Sigmoid colon (tissue), 7 donors: ENCODE measurements at regions of chr18 and their contacts with region 1.

Region 1: GRCh38 chr18:4106407-4107033 is 348.6 kb downstream of the DLGAP1 start:
- DNase-seq: peak; percentile 70
- H3K4me3 ChIP-seq: peak overlapping the region in 3 of 4 donors; percentile 6 to 26 (median 23)
- H3K27ac ChIP-seq: no peak overlapping the region
- H3K4me1 ChIP-seq: no peaks in the 10 kb centered on the region
- H3K27me3 ChIP-seq: no peaks in the 10 kb centered on the region
- CTCF ChIP-seq: peak; percentile 33 to 84 (median 63)
- EP300 ChIP-seq: no peak
- POLR2A ChIP-seq: no peak

Region 2: DNA sequence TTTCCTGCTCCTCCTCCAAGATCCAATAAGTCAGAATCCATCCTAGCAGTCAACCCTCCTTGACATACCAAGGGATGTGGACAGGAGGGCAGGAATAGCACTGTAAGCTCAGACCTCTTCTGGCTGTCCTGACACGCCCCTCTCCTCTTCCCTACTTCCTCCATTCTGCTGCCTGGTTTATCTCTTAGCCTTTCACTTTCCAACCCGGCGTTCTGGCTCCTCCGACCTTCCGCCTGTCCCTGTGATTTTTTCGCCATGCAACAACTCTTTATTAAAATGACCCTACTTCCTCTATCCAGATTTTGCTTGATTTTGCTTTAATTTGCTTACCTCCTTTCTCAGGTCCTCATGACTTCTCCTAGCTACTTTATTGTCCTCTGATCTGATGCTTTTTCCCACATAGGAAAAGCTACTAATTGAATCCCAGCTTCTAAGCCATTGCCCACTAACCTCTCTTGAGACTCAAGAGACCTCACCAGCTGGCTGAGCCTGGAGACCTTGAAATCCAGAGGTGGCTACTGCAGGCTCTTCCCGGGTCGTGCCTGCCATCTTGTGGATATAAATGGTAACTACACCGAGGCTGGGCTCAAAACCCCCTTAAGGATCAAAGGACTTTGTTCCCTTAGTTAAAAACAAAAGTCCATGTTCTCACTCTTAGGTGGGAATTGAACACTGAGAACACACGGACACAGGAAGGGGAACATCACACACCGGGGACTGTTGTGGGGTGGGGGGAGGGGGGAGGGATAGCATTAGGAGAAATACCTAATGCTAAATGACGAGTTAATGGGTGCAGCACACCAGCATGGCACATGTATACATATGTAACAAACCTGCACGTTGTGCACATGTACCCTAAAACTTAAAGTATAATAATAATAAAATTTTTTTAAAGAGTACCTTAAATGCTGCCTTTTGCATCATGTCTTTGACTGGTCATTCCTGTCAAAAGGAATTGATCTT is 951.1 kb after region 1 on chr18:
- intact Hi-C with region 1: loop called (anchors 2 kb)
- DNase-seq: peak; percentile 69
- H3K4me3 ChIP-seq: no peak overlapping the region
- H3K27ac ChIP-seq: no peak overlapping the region
- H3K4me1 ChIP-seq: no peaks in the 10 kb centered on the region
- H3K27me3 ChIP-seq: no peaks in the 10 kb centered on the region
- CTCF ChIP-seq: peak in 3 of 4 experiments; percentile 49 to 73 (median 59)
- EP300 ChIP-seq: no peak
- POLR2A ChIP-seq: no peak